H1 (cell line): ENCODE measurements at regions of chr21 and their contacts with region 1.

Region 1: DNA sequence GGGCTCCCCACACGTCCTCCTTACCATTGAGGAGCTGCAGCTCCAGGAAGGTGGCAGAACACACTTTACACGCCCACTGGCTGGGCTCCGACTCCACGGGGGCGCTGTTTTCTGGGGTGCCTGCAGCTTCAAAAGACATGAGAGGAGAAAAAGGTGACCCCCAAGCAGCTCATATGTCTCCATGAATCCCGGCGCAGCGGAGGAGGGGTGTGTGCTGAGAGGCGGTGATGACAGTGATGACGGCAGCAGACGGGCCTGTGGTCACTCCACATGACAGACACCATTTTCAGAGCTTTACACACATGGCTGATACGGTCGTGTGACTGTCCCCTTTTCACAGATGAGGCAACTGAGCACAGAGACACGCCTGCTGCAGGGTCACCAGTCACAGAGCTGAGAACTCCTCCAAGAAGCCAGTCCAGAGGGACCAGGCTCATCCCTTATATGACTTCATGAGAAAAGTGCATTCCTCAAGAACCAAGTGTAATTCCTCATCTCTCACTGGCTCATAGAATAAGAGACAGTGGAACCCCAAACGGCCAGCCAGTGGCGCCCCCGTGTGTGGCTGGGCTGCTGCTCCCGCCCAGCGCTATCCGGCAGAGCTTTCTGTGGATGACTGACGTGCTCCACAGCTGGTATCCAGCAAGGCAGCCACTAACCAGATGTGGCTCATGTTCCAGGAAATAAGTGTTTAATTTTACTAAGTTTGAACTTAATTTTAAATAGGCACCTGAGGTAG is 31.9 kb downstream of the PRDM15 start:
- DNase-seq: peak in 1 of 2 experiments; percentile 54
- H3K4me3 ChIP-seq: no peak overlapping the region
- H3K27ac ChIP-seq: no peak overlapping the region
- H3K4me1 ChIP-seq: peaks cover 0 to 2% (median 0%) of the 10 kb centered on the region in 4 experiments; a peak in 1 of 7 replicates
- H3K27me3 ChIP-seq: no peaks in the 10 kb centered on the region
- CTCF ChIP-seq: peak; percentile 55 to 65 (median 62)
- EP300 ChIP-seq: no peak
- POLR2A ChIP-seq: no peak
- RAD21 ChIP-seq: peak; percentile 61

Region 2: GRCh38 chr21:41858466-41859296 is 11.4 kb after region 1 on chr21:
- CTCF ChIA-PET with region 1: interaction called, 11 read pairs
- POLR2A ChIA-PET with region 1: interaction called, 3 read pairs
- DNase-seq: no peak
- H3K4me3 ChIP-seq: no peak overlapping the region
- H3K27ac ChIP-seq: no peak overlapping the region
- H3K4me1 ChIP-seq: peaks cover 0 to 3% (median 0%) of the 10 kb centered on the region in 4 experiments; a peak in 1 of 7 replicates
- H3K27me3 ChIP-seq: no peaks in the 10 kb centered on the region
- CTCF ChIP-seq: no peak
- EP300 ChIP-seq: no peak
- POLR2A ChIP-seq: no peak
- RAD21 ChIP-seq: no peak; a peak in 1 of 4 replicates

Region 3: DNA sequence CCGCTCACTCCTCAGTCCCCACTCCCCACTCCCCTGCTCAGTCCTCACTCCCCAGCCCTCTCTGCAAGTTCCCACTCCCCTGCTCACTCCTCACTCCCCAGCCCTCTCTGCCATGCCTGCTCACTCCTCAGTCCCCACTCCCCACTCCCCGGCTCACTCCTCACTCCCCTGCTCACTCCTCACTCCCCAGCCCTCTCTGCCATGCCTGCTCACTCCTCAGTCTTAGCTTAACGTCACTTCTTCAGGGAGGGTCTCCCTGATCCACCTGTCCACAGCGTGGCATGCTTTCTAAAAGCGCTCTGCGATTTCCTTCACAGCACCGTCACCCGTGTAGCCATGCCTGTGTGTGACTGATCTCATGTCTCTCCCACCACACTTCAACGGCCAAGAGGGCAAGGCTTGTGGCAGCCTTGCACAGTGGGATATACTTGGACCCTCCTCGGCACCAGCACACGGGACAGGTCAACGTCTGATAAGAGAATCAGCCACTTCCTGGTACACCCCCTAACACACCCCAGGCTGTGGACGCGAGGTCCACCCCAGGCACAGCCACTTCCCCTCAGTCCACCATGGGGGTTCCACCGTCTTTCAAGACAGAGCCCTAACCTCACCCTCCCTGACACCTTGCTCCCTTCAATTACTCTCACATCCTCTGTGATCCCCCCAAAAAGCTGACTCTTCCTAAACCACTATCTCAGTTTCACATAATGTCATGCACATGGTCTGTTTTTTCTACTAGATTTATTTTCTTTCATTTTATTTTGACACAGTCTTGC is 18.0 kb after region 1 on chr21:
- CTCF ChIA-PET with region 1: interaction called, 11 read pairs
- POLR2A ChIA-PET with region 1: interaction called, 3 read pairs
- DNase-seq: no peak
- H3K4me3 ChIP-seq: no peak overlapping the region
- H3K27ac ChIP-seq: no peak overlapping the region
- H3K4me1 ChIP-seq: peaks cover 0 to 3% (median 0%) of the 10 kb centered on the region in 4 experiments; a peak in 2 of 7 replicates
- H3K27me3 ChIP-seq: no peaks in the 10 kb centered on the region
- CTCF ChIP-seq: no peak
- EP300 ChIP-seq: no peak
- POLR2A ChIP-seq: no peak
- RAD21 ChIP-seq: no peak

Region 4: DNA sequence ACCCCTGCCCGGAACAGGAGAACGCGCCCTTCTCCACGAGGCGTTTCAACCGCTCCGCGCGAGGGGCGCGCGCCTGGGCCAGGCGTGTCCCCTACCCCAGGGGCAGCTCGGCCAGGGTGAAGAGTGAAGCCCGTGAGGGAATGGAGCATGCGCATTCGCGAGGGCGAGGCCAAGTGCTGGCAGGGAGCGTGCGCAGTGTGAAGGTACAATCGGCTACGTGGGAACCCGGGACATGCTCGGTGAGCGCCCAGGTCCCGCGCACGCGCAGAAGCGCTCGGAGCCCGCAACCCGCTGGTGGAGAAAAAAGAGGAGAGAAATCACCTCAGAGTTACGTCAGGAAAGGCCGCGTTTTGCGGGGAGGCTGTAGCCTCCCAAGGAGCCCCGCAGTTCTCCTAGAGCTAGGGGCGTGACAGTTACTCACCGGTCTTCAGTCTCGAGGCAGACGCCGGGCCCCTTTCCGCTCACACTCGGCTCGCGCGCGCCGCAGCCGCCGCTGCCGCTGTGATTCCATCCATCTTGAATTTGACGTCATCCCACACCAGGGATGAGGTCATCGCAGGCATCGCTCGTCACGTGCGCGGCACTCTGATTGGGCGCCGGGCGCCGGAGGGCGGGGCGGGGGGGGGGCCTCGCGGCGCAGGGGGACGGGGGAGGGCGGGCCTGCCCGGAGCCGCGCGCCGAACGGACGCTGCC is 162.7 kb after region 1 on chr21 and contains the start of gene ZBTB21:
- CTCF ChIA-PET with region 1: no interaction called
- POLR2A ChIA-PET with region 1: no interaction called
- DNase-seq: peak; percentile 92 to 98
- H3K4me3 ChIP-seq: peak within 1 kb of the TSS; percentile 65 to 82 (median 72)
- H3K27ac ChIP-seq: peak within 1 kb of the TSS; percentile 75
- H3K4me1 ChIP-seq: no peaks in the 10 kb centered on the region; a peak in 1 of 7 replicates
- H3K27me3 ChIP-seq: peaks cover 0 to 15% (median 13%) of the 10 kb centered on the region in 4 experiments; a peak in 6 of 7 replicates
- CTCF ChIP-seq: no peak
- EP300 ChIP-seq: no peak
- POLR2A ChIP-seq: peak in 1 of 2 experiments; percentile 69; a peak in 2 of 3 replicates
- RAD21 ChIP-seq: no peak
- total RNA-seq, gene ZBTB21: 16.2 and 17.8 TPM in 2 replicates

Region 5: DNA sequence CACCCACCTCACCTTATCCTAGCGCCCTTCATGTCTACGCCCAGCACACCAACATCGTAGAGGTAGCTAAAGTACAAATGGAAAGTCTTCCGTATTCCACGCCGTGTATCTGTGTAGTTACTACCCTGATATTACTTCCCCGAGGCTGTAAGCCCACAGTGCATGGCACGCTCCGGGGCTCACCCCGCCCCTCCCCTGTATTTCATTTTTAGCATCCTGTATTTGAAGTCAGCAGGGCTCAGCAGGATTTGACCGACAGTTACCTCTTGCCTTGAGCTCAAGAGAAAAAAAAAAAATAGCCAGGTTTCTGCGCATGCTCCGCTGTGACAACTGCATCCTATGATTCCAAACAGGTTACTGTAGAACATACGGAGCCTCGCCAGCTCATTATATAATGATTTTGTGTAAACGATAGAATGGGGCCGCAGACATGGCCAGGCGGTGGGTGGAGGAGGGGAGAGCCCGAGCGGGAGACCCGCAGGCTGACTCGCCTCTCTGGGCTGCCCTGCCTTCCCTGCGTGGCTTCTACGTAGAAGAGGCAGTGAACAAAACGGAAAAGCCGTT is 373.0 kb after region 1 on chr21:
- CTCF ChIA-PET with region 1: no interaction called
- POLR2A ChIA-PET with region 1: no interaction called
- DNase-seq: peak in 1 of 2 experiments; percentile 76
- H3K4me3 ChIP-seq: peak overlapping the region; percentile 59 to 89 (median 67)
- H3K27ac ChIP-seq: no peak overlapping the region
- H3K4me1 ChIP-seq: peaks cover 0 to 4% (median 2%) of the 10 kb centered on the region in 4 experiments; a peak in 4 of 7 replicates
- H3K27me3 ChIP-seq: peaks cover 8 to 40% (median 23%) of the 10 kb centered on the region in 4 experiments
- CTCF ChIP-seq: no peak
- EP300 ChIP-seq: no peak
- POLR2A ChIP-seq: no peak
- RAD21 ChIP-seq: no peak